Posterior cingulate gyrus (tissue), 11 donors: ENCODE measurements at regions of chr5 and their contacts with region 1.

Region 1: DNA sequence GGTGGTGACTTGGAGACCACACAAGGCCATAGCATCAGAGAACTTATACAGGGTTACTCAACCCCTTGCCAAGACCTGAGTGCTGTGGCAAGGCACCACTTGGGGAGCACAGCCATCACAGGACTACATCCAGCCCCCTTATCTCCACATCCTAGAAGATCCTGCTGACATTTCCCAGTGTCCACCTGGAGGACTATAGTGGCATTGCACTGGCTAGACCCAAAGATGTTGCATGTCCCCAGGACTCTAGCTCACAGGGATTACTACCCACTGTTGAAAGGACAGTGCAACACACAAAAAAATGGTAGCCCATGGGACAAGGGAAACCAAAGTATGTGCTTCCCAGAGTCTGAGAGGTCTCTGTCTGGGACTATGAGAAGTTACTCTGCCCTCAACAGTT is 411.1 kb upstream of the NUDT12 start:
- DNase-seq: no peak

Region 2: DNA sequence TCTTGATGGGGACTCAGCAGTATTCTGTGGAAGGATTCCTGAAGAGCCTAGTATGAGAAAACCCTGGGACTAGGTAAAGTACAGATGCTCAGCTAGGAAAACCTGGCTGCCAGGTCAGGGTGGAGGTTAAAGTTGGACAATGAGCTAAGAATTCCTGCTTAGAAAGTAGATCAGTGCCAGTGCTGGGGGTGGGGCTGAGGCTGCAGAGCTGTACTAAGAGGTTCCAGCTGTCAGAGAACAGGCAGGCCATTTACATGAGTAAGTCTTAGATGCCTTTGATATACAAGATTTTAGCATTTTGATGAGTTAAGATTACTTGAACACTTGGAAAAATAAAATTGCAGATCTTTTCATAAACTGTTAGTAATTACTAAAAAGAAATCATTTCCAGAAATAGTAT is 78.8 kb before region 1 on chr5:
- intact Hi-C with region 1: no loop called
- DNase-seq: peak in 8 of 10 donors; percentile 15 to 88 (median 58)

Region 3: GRCh38 chr5:103953601-103954382 is 19.9 kb before region 1 on chr5:
- intact Hi-C with region 1: loop called (anchors 1 kb)
- DNase-seq: peak in 1 of 10 donors; percentile 71

Region 4: GRCh38 chr5:104652271-104652861 is 678.7 kb after region 1 on chr5:
- intact Hi-C with region 1: no loop called
- DNase-seq: peak in 1 of 10 donors; percentile 71